ENCODE measurements at regions of chr9 and their contacts with region 1.

Region 1: DNA sequence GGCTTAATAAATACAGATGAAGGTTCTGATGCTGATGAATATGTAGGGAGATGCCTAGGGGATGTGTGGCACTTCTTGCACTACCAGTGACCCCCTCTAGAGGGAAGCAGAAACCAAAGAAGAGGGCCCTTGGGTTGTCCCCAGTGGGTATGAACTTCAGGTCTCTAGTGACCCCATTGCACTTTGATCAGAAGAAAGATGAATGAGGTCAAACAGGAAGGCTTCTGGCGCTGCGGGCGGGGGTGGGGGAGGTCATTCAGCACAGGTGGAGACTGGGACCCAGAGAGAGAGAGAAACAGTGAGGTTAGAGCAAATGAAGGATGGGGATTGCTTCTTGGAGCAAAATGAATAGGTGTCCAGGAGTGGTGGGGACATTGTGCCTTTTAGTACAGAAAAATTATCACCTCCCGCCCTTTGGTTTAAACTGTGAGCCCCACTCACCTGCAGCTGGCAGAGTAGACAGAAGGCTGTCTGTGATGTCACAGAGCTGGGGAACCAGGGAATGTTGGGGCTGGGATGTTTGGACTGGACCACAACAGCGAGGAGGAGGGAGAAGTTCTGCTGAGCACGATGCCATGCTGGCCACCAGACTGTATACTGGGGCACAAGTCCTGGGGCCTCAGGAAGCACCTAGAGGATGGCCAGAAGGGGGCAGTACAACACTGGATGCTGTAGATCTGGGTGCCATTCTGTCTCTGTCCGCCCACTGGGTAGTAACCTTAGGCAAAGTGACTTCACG is at the start of gene TEX48:
- DNase-seq: peak; percentile 79 to 84 (median 81)
- H3K4me3 ChIP-seq: peak within 1 kb of the TSS in 1 of 2 donors; percentile 11
- H3K4me3 Mint-ChIP-seq: peak within 1 kb of the TSS; percentile 1 to 80 (median 62)
- H3K27ac ChIP-seq: peak within 1 kb of the TSS; percentile 23
- H3K27ac Mint-ChIP-seq: peak within 1 kb of the TSS; percentile 75 to 96 (median 92)
- H3K4me1 ChIP-seq: peaks cover 22% of the 10 kb centered on the region
- H3K4me1 Mint-ChIP-seq: peaks cover 15 to 18% (median 17%) of the 10 kb centered on the region in 4 donors
- H3K27me3 ChIP-seq: no peaks in the 10 kb centered on the region
- H3K27me3 Mint-ChIP-seq: peaks cover 2 to 3% of the 10 kb centered on the region in 2 donors
- total RNA-seq, gene TEX48: not detected

Region 2: GRCh38 chr9:114662081-114662989 is 19.4 kb before region 1 on chr9:
- CTCF ChIA-PET with region 1: interaction called, 14 read pairs
- POLR2A ChIA-PET with region 1: no interaction called
- intact Hi-C with region 1: no loop called
- DNase-seq: peak; percentile 45 to 52 (median 50)
- H3K4me3 ChIP-seq: no peak overlapping the region
- H3K4me3 Mint-ChIP-seq: no peak overlapping the region
- H3K27ac ChIP-seq: no peak overlapping the region
- H3K27ac Mint-ChIP-seq: no peak overlapping the region
- H3K4me1 ChIP-seq: no peaks in the 10 kb centered on the region
- H3K4me1 Mint-ChIP-seq: peaks cover 0 to 1% (median 0%) of the 10 kb centered on the region in 4 donors
- H3K27me3 ChIP-seq: no peaks in the 10 kb centered on the region
- H3K27me3 Mint-ChIP-seq: peaks cover 7% of the 10 kb centered on the region in 2 donors

Region 3: GRCh38 chr9:114696814-114697544 is 15.2 kb after region 1 on chr9:
- CTCF ChIA-PET with region 1: interaction called, 38 read pairs
- POLR2A ChIA-PET with region 1: interaction called, 3 read pairs
- intact Hi-C with region 1: no loop called
- DNase-seq: peak in 3 of 5 donors; percentile 5 to 59 (median 16)
- H3K4me3 ChIP-seq: no peak overlapping the region
- H3K4me3 Mint-ChIP-seq: peak overlapping the region in 7 of 8 donors; percentile 63 to 84 (median 70)
- H3K27ac ChIP-seq: no peak overlapping the region
- H3K27ac Mint-ChIP-seq: peak overlapping the region; percentile 51 to 93 (median 74)
- H3K4me1 ChIP-seq: peaks cover 33% of the 10 kb centered on the region
- H3K4me1 Mint-ChIP-seq: peaks cover 27 to 49% (median 30%) of the 10 kb centered on the region in 4 donors
- H3K27me3 ChIP-seq: no peaks in the 10 kb centered on the region
- H3K27me3 Mint-ChIP-seq: no peaks in the 10 kb centered on the region

Region 4: GRCh38 chr9:114718801-114719221 is 37.0 kb after region 1 on chr9:
- CTCF ChIA-PET with region 1: interaction called, 8 read pairs
- POLR2A ChIA-PET with region 1: interaction called, 3 read pairs
- intact Hi-C with region 1: loop called (anchors 2 kb)
- DNase-seq: peak; percentile 65 to 88 (median 77)
- H3K4me3 ChIP-seq: peak overlapping the region in 1 of 2 donors; percentile 15
- H3K4me3 Mint-ChIP-seq: peak overlapping the region in 7 of 8 donors; percentile 53 to 82 (median 61)
- H3K27ac ChIP-seq: peak overlapping the region; percentile 46
- H3K27ac Mint-ChIP-seq: peak overlapping the region; percentile 83 to 95 (median 93)
- H3K4me1 ChIP-seq: peaks cover 47% of the 10 kb centered on the region
- H3K4me1 Mint-ChIP-seq: peaks cover 38 to 57% (median 45%) of the 10 kb centered on the region in 4 donors
- H3K27me3 ChIP-seq: no peaks in the 10 kb centered on the region
- H3K27me3 Mint-ChIP-seq: no peaks in the 10 kb centered on the region

Region 5: GRCh38 chr9:114894801-114895433 is 213.2 kb after region 1 on chr9:
- CTCF ChIA-PET with region 1: interaction called, 23 read pairs
- POLR2A ChIA-PET with region 1: interaction called, 6 read pairs
- intact Hi-C with region 1: no loop called
- DNase-seq: no peak
- H3K4me3 ChIP-seq: no peak overlapping the region
- H3K4me3 Mint-ChIP-seq: peak overlapping the region in 6 of 8 donors; percentile 15 to 81 (median 67)
- H3K27ac ChIP-seq: no peak overlapping the region
- H3K27ac Mint-ChIP-seq: peak overlapping the region in 6 of 7 donors; percentile 43 to 92 (median 81)
- H3K4me1 ChIP-seq: peaks cover 79% of the 10 kb centered on the region
- H3K4me1 Mint-ChIP-seq: peaks cover 17 to 54% (median 42%) of the 10 kb centered on the region in 4 donors
- H3K27me3 ChIP-seq: no peaks in the 10 kb centered on the region
- H3K27me3 Mint-ChIP-seq: no peaks in the 10 kb centered on the region

Region 6: DNA sequence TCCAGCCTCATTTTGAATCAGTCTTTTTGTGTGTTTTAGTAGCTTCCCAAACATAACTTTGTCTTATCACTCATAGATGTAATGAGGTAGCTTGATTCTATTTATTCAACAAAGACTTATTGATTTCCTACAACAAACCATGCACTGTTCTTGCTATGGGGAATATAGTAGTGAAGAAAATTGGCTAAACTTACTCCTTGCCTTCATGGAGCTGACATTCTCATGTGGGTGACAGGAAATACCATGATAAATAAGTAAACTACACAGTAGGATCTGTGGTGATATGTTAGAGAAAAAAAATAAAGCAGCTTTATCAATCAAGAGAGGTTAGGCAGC is 691.9 kb after region 1 on chr9:
- CTCF ChIA-PET with region 1: no interaction called
- POLR2A ChIA-PET with region 1: no interaction called
- intact Hi-C with region 1: no loop called
- DNase-seq: no peak
- H3K4me3 ChIP-seq: no peak overlapping the region
- H3K4me3 Mint-ChIP-seq: no peak overlapping the region
- H3K27ac ChIP-seq: no peak overlapping the region
- H3K27ac Mint-ChIP-seq: no peak overlapping the region
- H3K4me1 ChIP-seq: no peaks in the 10 kb centered on the region
- H3K4me1 Mint-ChIP-seq: no peaks in the 10 kb centered on the region
- H3K27me3 ChIP-seq: no peaks in the 10 kb centered on the region
- H3K27me3 Mint-ChIP-seq: peaks cover 1 to 3% of the 10 kb centered on the region in 2 donors

Region 7: DNA sequence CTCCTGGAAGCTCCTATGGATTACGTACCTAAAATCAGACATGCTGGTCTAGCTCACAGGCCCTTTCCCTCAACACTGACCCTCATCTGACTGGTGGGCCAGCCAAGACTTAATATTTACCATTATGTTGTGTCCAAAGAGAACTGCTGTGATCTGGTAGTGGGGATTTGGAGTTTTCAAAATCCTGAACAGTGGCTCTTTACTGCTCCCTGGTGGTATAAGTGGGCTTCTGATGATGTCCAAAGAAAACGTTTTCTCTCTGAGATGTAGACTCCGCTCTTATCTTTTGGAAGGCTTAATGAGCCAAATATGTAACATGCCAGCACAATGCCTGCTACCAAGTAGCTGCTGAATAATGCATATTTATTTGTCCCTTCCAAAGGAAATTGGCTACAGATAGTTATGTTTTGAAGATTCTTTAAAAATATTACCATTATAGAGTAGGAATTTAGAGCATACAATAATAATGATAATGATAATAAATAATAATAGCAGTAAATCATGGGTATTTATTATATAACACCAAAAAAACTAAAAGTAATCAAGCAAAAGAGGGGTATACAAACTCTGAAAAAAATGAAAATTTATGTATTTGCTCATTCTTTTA is 842.8 kb after region 1 on chr9:
- CTCF ChIA-PET with region 1: interaction called, 16 read pairs
- POLR2A ChIA-PET with region 1: no interaction called
- intact Hi-C with region 1: no loop called
- DNase-seq: peak in 4 of 5 donors; percentile 12 to 28 (median 24)
- H3K4me3 ChIP-seq: no peak overlapping the region
- H3K4me3 Mint-ChIP-seq: no peak overlapping the region
- H3K27ac ChIP-seq: no peak overlapping the region
- H3K27ac Mint-ChIP-seq: no peak overlapping the region
- H3K4me1 ChIP-seq: no peaks in the 10 kb centered on the region
- H3K4me1 Mint-ChIP-seq: no peaks in the 10 kb centered on the region
- H3K27me3 ChIP-seq: no peaks in the 10 kb centered on the region
- H3K27me3 Mint-ChIP-seq: peaks cover 10 to 11% of the 10 kb centered on the region in 2 donors

Measured in CD4-positive, alpha-beta memory T cell (primary cell).